Activated CD4-positive, alpha-beta memory T cell treated with anti-CD3 and anti-CD28 coated beads for 36 hours (primary cell): ENCODE measurements at regions of chr2 and their contacts with region 1.

Region 1: DNA sequence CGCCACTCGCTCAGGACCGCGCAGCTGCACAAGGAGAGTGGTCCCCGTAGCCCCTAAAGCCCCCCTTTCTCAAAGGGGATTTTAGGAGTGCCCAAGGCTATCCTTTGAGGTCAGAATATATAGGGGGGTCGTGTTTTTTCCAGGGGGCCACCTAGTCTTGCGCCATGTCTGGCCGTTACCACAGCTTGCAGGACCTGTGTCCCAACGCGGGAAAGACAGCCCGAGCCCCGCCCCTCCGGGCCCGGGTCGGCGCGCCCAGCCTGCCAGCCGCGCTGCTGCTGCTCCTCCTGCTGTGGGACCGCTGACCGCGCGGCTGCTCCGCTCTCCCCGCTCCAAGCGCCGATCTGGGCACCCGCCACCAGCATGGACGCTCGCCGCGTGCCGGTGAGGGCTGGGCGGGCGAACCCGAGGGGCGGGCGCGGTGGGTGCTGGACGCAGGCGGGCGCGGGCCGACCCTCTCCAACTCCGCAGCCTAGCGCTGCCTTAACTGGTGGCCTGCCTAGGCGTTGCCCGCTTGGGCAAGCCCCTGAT is at the start of gene CDCA7:
- DNase-seq: peak; percentile 78
- H3K4me3 Mint-ChIP-seq: peak within 1 kb of the TSS; percentile 84
- H3K27ac Mint-ChIP-seq: peak within 1 kb of the TSS; percentile 93
- H3K4me1 Mint-ChIP-seq: peaks cover 41% of the 10 kb centered on the region
- H3K27me3 Mint-ChIP-seq: peaks cover 47% of the 10 kb centered on the region
- total RNA-seq, gene CDCA7: 59.9 to 64.1 TPM

Region 2: DNA sequence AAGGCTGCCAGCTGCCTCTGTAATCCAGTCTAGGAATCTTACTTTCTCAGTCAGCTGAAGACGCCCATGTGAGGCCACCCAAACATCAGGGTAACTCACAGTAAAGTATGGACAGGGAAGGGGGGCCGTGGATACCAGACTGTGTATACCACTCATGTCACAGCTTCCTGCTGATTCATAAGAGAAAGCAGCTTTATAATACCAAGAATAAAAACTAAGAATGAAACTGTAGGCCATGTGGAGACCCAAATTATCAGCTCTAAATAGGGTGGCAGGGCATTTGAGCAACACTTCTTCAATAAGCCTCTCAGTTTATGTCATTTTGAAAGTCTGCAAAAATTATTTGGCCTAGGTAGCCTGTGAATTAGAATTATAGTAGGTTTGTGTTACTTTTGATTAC is 115.0 kb before region 1 on chr2:
- CTCF ChIA-PET with region 1: no interaction called
- POLR2A ChIA-PET with region 1: no interaction called
- intact Hi-C with region 1: loop called (anchors 10 kb)
- DNase-seq: peak; percentile 57
- H3K4me3 Mint-ChIP-seq: no peak overlapping the region
- H3K27ac Mint-ChIP-seq: no peak overlapping the region
- H3K4me1 Mint-ChIP-seq: peaks cover 5% of the 10 kb centered on the region
- H3K27me3 Mint-ChIP-seq: peaks cover 9% of the 10 kb centered on the region

Region 3: GRCh38 chr2:173278794-173279526 is 75.7 kb before region 1 on chr2:
- CTCF ChIA-PET with region 1: no interaction called
- POLR2A ChIA-PET with region 1: interaction called, 3 read pairs
- intact Hi-C with region 1: loop called (anchors 1 kb)
- DNase-seq: no peak
- H3K4me3 Mint-ChIP-seq: no peak overlapping the region
- H3K27ac Mint-ChIP-seq: peak overlapping the region; percentile 42
- H3K4me1 Mint-ChIP-seq: peaks cover 22% of the 10 kb centered on the region
- H3K27me3 Mint-ChIP-seq: peaks cover 15% of the 10 kb centered on the region

Region 4: GRCh38 chr2:173339807-173340206 is 14.9 kb before region 1 on chr2:
- CTCF ChIA-PET with region 1: no interaction called
- POLR2A ChIA-PET with region 1: no interaction called
- intact Hi-C with region 1: no loop called
- DNase-seq: no peak
- H3K4me3 Mint-ChIP-seq: no peak overlapping the region
- H3K27ac Mint-ChIP-seq: no peak overlapping the region
- H3K4me1 Mint-ChIP-seq: no peaks in the 10 kb centered on the region
- H3K27me3 Mint-ChIP-seq: peaks cover 6% of the 10 kb centered on the region

Region 5: GRCh38 chr2:174039551-174040416 is 685.1 kb after region 1 on chr2:
- CTCF ChIA-PET with region 1: no interaction called
- POLR2A ChIA-PET with region 1: no interaction called
- intact Hi-C with region 1: no loop called
- DNase-seq: peak; percentile 90
- H3K4me3 Mint-ChIP-seq: peak overlapping the region; percentile 43
- H3K27ac Mint-ChIP-seq: peak overlapping the region; percentile 86
- H3K4me1 Mint-ChIP-seq: peaks cover 17% of the 10 kb centered on the region
- H3K27me3 Mint-ChIP-seq: peaks cover 7% of the 10 kb centered on the region